IMR-90 (cell line): ENCODE measurements at regions of chr2 and their contacts with region 1.

Region 1: DNA sequence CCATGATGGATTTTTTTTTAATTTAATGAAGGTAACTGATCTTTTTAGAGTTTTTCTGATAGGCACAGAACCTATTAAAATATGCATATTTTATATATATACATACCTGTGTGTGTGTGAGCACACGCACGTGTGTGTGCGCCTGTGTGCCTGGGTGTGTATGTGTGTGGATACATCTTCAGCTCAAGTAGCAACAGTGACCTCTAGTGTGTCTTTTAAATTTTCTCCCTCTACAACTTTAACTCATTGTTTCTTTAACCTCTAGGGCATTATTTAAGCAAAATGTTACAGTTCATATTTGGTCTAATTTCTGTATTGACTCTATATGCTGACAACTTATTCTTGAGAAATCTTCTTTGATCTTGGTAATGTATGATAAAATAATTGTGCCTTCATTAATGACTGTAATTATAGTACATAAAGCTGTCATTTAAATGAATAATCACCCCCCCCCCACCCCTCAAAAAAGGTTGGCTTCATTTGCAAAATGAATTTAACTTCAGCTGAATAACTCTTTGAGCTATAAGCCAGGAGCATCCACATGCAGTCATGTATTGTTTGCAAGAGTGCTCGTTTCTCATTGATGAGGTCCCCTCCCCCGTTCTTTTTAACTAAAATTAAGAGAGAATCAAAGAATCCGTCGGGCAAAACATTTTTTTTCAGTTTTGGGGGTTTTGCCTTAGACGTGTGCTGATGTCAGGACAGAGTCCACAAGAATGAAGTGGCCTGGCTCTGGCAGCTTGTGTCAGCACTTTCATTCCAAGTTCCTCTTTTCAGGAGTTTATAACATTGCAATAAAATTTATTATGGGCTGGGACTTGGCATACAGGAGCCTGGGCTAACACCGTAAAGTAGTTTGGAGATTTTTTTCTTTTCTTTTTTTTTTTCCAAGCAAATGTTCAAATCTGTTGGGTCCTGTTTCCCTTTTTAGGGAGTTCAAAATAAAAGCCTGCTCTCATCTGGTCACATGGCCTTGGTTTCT is 80.0 kb downstream of the ETAA1 start:
- DNase-seq: peak; percentile 81
- ATAC-seq: peak; percentile 69
- H3K4me3 ChIP-seq: no peak overlapping the region
- H3K27ac ChIP-seq: no peak overlapping the region
- H3K4me1 ChIP-seq: no peaks in the 10 kb centered on the region
- H3K27me3 ChIP-seq: no peaks in the 10 kb centered on the region
- CTCF ChIP-seq: peak; percentile 68
- POLR2A ChIP-seq: no peak
- RAD21 ChIP-seq: peak; percentile 81

Region 2: DNA sequence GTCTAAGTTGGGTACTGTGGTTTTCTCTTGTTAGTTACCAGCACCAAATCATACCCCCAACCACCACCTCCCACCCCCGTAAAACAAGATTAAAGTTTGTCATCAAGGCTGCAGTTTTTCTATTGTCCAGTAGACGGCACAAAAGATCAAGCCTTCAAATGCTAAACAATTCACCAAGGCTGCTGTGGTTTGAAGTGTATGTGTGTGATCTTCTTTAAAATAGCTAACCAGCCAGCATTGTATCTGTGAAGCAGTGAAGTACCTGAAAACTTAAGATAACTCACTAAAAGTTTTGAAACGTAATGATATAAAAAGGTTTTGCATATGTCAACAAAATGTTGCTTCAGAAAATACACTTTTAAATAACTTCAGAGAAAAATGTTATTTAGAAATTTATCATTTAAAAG is 1048.0 kb before region 1 on chr2:
- CTCF ChIA-PET with region 1: no interaction called
- POLR2A ChIA-PET with region 1: no interaction called
- dilution Hi-C with region 1: no loop called
- in situ Hi-C with region 1: no loop called
- intact Hi-C with region 1: loop called (anchors 5 kb)
- DNase-seq: peak; percentile 79
- ATAC-seq: peak; percentile 19; the same call in 1 of the 2 replicates
- H3K4me3 ChIP-seq: no peak overlapping the region
- H3K27ac ChIP-seq: no peak overlapping the region
- H3K4me1 ChIP-seq: peaks cover 5% of the 10 kb centered on the region; the same call in 1 of the 2 replicates
- H3K27me3 ChIP-seq: peaks cover 6% of the 10 kb centered on the region; the same call in 1 of the 2 replicates
- CTCF ChIP-seq: peak; percentile 86
- POLR2A ChIP-seq: 0 out of 2 replicates have a peak, but pooled peaks have one; percentile 24
- RAD21 ChIP-seq: peak; percentile 88

Region 3: GRCh38 chr2:67221266-67221665 is 255.8 kb before region 1 on chr2:
- CTCF ChIA-PET with region 1: no interaction called
- POLR2A ChIA-PET with region 1: no interaction called
- dilution Hi-C with region 1: no loop called
- in situ Hi-C with region 1: no loop called
- intact Hi-C with region 1: loop called (anchors 2 kb)
- DNase-seq: peak; percentile 58
- ATAC-seq: no peak
- H3K4me3 ChIP-seq: no peak overlapping the region
- H3K27ac ChIP-seq: no peak overlapping the region
- H3K4me1 ChIP-seq: peaks cover 6% of the 10 kb centered on the region
- H3K27me3 ChIP-seq: no peaks in the 10 kb centered on the region
- CTCF ChIP-seq: no peak
- POLR2A ChIP-seq: no peak
- RAD21 ChIP-seq: no peak

Region 4: DNA sequence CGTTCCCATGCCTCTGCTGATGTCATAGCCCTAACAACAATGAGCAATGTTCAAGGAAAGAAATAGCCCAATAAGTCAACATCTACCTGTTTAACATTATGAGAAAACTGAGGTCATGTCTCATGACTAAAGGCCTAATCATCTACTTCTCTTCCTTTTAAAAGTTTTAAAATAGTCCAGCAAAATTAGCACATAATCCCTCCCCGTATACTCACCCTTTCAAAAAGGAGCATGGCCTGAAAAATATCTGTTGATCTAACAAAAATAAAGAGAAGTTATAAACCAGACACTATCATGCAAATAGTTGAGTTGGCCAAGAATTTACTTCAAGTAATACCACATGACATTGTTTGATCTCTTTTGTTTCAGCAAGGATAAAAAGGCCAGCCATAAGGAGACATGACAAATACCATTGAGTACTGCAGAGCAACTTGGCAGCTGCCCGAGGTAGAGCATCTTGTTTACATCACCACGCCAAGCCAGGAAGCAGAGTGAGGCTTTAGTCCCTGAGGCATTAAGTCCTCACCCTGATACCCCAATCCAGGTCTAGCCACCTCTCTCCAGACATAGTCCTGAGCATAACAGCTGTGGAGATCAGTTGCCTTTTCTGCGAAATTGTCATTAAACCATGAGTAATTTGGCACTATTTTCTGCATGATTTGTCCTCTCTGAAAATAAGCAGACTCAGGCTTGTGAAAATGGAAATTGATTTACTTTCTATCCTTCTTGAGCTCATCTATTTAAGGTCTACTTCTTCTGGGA is 217.3 kb before region 1 on chr2:
- CTCF ChIA-PET with region 1: no interaction called
- POLR2A ChIA-PET with region 1: no interaction called
- dilution Hi-C with region 1: no loop called
- in situ Hi-C with region 1: no loop called
- intact Hi-C with region 1: loop called (anchors 2 kb)
- DNase-seq: peak; percentile 94
- ATAC-seq: peak; percentile 19
- H3K4me3 ChIP-seq: no peak overlapping the region
- H3K27ac ChIP-seq: peak overlapping the region; percentile 63
- H3K4me1 ChIP-seq: peaks cover 20% of the 10 kb centered on the region
- H3K27me3 ChIP-seq: no peaks in the 10 kb centered on the region
- CTCF ChIP-seq: no peak
- POLR2A ChIP-seq: peak; percentile 91
- RAD21 ChIP-seq: no peak

Region 5: DNA sequence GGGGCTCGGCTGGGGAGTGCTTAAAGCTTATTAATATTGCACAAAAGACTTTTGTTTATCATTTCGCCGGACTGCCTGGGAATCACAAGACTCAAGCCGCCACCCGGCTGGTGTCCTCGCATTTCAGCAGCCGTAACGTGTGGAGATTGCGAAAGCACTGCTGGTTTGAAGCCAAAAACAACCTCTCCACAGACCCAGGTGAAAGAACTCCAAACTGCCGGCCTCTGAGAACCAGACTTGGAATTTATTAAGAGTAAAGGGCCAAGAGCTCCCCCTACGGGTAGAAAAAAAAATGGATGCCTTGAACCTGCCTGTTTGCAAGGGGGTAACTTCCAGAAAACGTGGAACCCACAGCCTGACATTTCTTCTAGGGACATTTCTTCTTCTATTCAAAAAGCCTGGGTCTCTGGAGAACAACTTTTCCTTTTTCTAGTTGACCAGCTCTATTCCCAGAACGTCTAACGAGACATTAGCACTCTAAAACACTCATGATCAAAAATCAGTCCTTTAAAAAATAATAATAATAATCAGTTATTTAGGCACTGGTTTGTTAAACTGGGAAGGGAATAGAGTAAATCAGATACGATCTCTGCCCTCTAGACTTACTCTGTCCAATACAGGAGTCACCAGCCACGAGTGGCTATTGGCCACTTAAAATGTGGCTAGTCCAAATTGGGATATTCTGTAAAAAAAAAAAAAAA is 369.4 kb after region 1 on chr2:
- CTCF ChIA-PET with region 1: no interaction called
- POLR2A ChIA-PET with region 1: no interaction called
- dilution Hi-C with region 1: no loop called
- in situ Hi-C with region 1: loop called (anchors 25 kb)
- intact Hi-C with region 1: loop called (anchors 2 kb)
- DNase-seq: peak; percentile 98
- ATAC-seq: peak; percentile 87
- H3K4me3 ChIP-seq: no peak overlapping the region
- H3K27ac ChIP-seq: no peak overlapping the region
- H3K4me1 ChIP-seq: peaks cover 6% of the 10 kb centered on the region
- H3K27me3 ChIP-seq: no peaks in the 10 kb centered on the region
- CTCF ChIP-seq: peak; percentile 78
- POLR2A ChIP-seq: no peak
- RAD21 ChIP-seq: peak; percentile 74